ENCODE measurements at regions of chr2 and their contacts with region 1.

Region 1: DNA sequence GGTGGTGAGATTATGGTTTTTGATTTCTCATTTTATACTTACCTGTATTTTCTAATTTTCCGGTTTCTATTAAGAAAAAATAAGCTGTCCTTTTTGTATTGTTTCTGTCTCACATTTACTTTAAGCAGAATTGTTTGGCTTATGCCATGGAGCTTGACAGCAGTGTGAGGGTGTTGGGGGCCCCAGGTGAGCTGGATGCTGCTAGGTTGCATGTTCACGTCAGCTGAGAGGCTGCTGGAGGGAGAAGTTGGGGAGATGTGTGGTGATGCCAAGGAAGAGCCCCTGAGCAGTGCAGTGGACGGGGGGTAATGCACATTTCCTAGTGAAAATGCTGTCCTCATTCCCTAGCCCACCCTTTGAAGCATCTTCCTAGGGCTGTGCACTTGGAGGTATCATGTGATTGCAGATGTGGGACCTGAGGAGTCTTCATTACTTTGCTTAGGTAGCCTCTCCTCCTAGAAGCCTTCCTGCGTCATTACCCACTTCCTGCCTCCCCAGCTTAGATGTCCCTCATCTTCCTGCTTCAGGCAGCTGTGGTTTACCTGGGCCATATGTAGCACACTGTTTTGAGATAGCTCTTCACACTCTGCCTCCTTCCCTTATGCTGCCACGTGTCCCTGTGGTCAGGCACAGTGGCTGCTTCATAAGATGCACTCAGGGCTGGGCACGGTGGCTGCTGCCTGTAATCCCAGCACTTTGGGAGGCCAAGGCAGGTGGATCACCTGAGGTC is 16.2 kb downstream of the ATG16L1 start:
- DNase-seq: peak; percentile 68 to 98 (median 84)
- ATAC-seq: peak; percentile 89
- H3K4me3 ChIP-seq: peak overlapping the region in 1 of 2 experiments; percentile 2
- H3K4me3 Mint-ChIP-seq: peak overlapping the region; percentile 68
- H3K27ac ChIP-seq: peak overlapping the region; percentile 62 to 95
- H3K27ac Mint-ChIP-seq: peak overlapping the region; percentile 94
- H3K4me1 ChIP-seq: peaks cover 59% of the 10 kb centered on the region
- H3K4me1 Mint-ChIP-seq: peaks cover 75% of the 10 kb centered on the region
- H3K27me3 ChIP-seq: no peaks in the 10 kb centered on the region
- H3K27me3 Mint-ChIP-seq: no peaks in the 10 kb centered on the region
- CTCF ChIP-seq: no peak

Region 2: DNA sequence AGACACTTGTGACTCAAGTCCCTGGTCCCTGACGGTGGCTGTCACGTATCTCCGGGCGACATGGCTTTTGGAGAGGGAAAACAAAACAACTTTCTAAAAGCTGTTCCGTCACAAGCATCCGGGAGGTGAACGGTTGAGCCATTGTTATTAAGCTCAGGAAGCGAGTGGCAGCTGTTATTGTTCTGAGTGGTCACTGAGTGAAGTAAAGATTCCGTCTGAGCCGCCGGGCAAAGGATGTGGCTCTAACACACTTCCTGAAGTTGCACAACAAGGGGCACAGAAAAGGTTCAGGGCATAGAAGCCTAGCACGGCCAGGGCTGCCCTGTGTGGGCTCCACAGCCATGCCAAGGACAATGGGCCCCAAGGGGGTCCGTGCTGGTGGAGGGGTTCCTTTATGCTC is 183.2 kb before region 1 on chr2:
- CTCF ChIA-PET with region 1: interaction called, 3 read pairs
- POLR2A ChIA-PET with region 1: interaction called, 5 read pairs
- intact Hi-C with region 1: loop called in 1 of 2 experiments (anchors 5 kb)
- DNase-seq: peak in 6 of 9 experiments; percentile 54 to 81 (median 66)
- ATAC-seq: peak; percentile 44
- H3K4me3 ChIP-seq: peak overlapping the region; percentile 13 to 16
- H3K4me3 Mint-ChIP-seq: peak overlapping the region; percentile 76
- H3K27ac ChIP-seq: peak overlapping the region; percentile 56 to 92
- H3K27ac Mint-ChIP-seq: peak overlapping the region; percentile 91
- H3K4me1 ChIP-seq: peaks cover 72% of the 10 kb centered on the region
- H3K4me1 Mint-ChIP-seq: peaks cover 85% of the 10 kb centered on the region
- H3K27me3 ChIP-seq: no peaks in the 10 kb centered on the region
- H3K27me3 Mint-ChIP-seq: no peaks in the 10 kb centered on the region
- CTCF ChIP-seq: no peak

Region 3: DNA sequence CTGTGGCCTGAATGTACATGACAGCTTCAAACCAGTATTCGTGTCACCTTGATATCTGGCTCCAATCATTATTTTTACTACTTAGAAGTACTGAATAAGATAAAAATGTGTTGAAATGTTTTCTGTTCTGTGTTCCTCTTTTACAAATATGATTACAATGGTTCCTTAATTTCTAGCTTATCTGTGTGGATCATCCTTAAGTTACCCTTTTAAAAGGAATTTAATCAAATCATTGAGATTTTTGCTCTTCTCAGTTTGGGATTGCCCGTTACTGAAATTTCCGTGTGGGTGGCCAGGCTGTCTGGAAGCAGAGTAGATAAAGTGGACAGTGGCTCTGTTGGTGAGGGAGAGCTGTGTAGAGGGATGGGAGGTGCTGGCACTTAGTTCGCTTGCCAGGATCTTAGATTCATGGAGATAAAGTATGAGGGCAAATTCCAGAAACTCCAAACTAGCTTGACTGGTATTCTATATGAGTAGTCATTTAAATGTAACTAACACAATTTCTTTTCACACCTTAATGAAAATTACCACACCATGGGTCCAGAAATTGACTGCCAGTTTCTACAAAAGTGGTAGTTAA is 12.5 kb after region 1 on chr2:
- CTCF ChIA-PET with region 1: interaction called, 4 read pairs
- POLR2A ChIA-PET with region 1: interaction called, 8 read pairs
- intact Hi-C with region 1: loop called in 1 of 2 experiments (anchors 1 kb)
- DNase-seq: no peak
- ATAC-seq: no peak
- H3K4me3 ChIP-seq: no peak overlapping the region
- H3K4me3 Mint-ChIP-seq: no peak overlapping the region
- H3K27ac ChIP-seq: peak overlapping the region in 1 of 2 experiments; percentile 21
- H3K27ac Mint-ChIP-seq: peak overlapping the region; percentile 57
- H3K4me1 ChIP-seq: peaks cover 34% of the 10 kb centered on the region
- H3K4me1 Mint-ChIP-seq: peaks cover 38% of the 10 kb centered on the region
- H3K27me3 ChIP-seq: no peaks in the 10 kb centered on the region
- H3K27me3 Mint-ChIP-seq: no peaks in the 10 kb centered on the region
- CTCF ChIP-seq: no peak

Region 4: DNA sequence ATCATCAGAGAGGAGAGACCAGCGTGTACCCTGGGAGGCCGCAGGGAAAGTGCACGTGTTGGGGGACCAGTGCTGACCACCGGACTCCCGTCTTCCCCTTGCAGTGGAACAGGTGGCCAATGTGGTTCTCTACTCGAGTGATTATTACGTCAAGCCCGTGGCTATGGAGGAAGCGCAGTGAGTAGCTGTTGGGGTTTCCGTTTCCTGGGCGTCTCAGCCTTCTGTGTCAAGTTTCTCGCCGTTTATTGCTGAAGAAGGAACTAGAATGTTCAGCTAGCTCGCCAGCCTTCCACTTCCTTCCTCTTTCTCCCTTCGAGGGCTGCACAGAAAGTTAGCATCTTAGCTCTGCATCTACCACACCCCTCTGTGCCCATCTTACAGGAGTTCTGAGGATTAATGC is 63.9 kb after region 1 on chr2:
- CTCF ChIA-PET with region 1: interaction called, 3 read pairs
- POLR2A ChIA-PET with region 1: interaction called, 9 read pairs
- intact Hi-C with region 1: loop called (anchors 1 to 5 kb)
- DNase-seq: peak; percentile 61 to 96 (median 83)
- ATAC-seq: peak; percentile 92
- H3K4me3 ChIP-seq: peak overlapping the region; percentile 2 to 5
- H3K4me3 Mint-ChIP-seq: peak overlapping the region; percentile 29
- H3K27ac ChIP-seq: peak overlapping the region; percentile 66 to 89
- H3K27ac Mint-ChIP-seq: peak overlapping the region; percentile 96
- H3K4me1 ChIP-seq: peaks cover 53% of the 10 kb centered on the region
- H3K4me1 Mint-ChIP-seq: peaks cover 48% of the 10 kb centered on the region
- H3K27me3 ChIP-seq: no peaks in the 10 kb centered on the region
- H3K27me3 Mint-ChIP-seq: no peaks in the 10 kb centered on the region
- CTCF ChIP-seq: no peak